ENCODE measurements at regions of chr7 and their contacts with region 1.

Region 1: GRCh38 chr7:64902806-64903721 is at the start of gene ZNF273:
- DNase-seq: peak; percentile 90 to 91
- ATAC-seq: peak; percentile 93 to 97
- H3K4me3 ChIP-seq: peak within 1 kb of the TSS; percentile 64 to 95 (median 78)
- H3K27ac ChIP-seq: peak within 1 kb of the TSS; percentile 65 to 84 (median 80)
- H3K4me1 ChIP-seq: peaks cover 0 to 32% of the 10 kb centered on the region in 2 donors
- H3K27me3 ChIP-seq: no peaks in the 10 kb centered on the region
- CTCF ChIP-seq: no peak
- POLR2A ChIP-seq: peak; percentile 53 to 66
- total RNA-seq, gene ZNF273: 0.29 to 9.3 (median 2.3) TPM

Region 2: DNA sequence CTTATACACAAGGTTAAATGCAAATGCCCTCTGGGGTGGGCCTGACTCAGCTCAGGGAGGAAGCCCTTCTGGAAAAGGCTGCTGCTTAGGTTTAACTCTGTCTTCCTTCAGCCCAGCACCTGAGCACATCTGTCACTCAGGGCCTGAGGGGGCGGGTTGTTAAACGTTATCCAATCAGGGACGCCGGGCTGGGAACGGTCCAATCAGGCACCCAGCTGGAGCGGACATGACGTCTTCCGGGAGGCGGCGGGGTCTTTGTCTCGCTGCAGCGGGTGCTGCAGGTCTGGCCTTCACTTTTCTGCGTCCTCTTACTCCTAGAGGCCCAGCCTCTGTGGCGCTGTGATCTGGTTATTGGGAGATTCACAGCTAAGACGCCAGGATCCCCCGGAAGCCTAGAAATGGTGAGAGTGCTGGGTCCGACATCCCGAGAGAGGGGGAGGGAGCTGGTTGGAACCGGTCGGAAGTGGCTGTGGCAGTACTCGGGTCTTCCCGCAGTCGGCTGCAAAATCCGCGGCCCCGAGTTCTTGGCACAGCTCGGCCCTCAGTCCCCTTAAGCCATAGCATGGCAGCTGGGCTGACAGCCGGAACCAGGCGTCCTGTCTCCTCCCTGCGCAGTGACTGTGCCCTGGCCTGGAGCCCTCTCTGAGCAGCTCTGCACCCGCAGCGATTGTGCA is 108.8 kb before region 1 on chr7 and contains the start of gene ZNF138:
- in situ Hi-C with region 1: loop called in 2 of 4 experiments (anchors 10 kb)
- intact Hi-C with region 1: loop called (anchors 10 kb)
- DNase-seq: peak; percentile 95 to 96
- ATAC-seq: peak; percentile 99 to 100
- H3K4me3 ChIP-seq: peak within 1 kb of the TSS; percentile 59 to 97 (median 71)
- H3K27ac ChIP-seq: peak within 1 kb of the TSS; percentile 71 to 88 (median 82)
- H3K4me1 ChIP-seq: peaks cover 6 to 20% of the 10 kb centered on the region in 2 donors
- H3K27me3 ChIP-seq: no peaks in the 10 kb centered on the region
- CTCF ChIP-seq: peak in 1 of 5 experiments; percentile 25
- POLR2A ChIP-seq: peak; percentile 53 to 67
- total RNA-seq, gene ZNF138: 4.5 to 11.6 (median 6.8) TPM

Region 3: GRCh38 chr7:65006094-65006992 is 103.3 kb after region 1 on chr7 and contains the start of gene ERV3-1:
- in situ Hi-C with region 1: loop called in 1 of 4 experiments (anchors 10 kb)
- intact Hi-C with region 1: loop called (anchors 5 kb)
- DNase-seq: peak; percentile 95
- ATAC-seq: peak; percentile 100
- H3K4me3 ChIP-seq: peak within 1 kb of the TSS; percentile 55 to 98 (median 91)
- H3K27ac ChIP-seq: peak within 1 kb of the TSS; percentile 76 to 89 (median 86)
- H3K4me1 ChIP-seq: peaks cover 12 to 18% of the 10 kb centered on the region in 2 donors
- H3K27me3 ChIP-seq: no peaks in the 10 kb centered on the region
- CTCF ChIP-seq: no peak
- POLR2A ChIP-seq: peak; percentile 89 to 90
- total RNA-seq, gene ERV3-1: 0.49 to 3.9 (median 2.9) TPM

Measured in gastrocnemius medialis (tissue), 4 donors.